Caco-2 (cell line): ENCODE measurements at regions of chr9 and their contacts with region 1.

Region 1: GRCh38 chr9:8361364-8361763 is 561.8 kb upstream of the DMAC1 start:
- DNase-seq: peak in 1 of 2 experiments; percentile 17
- H3K4me3 ChIP-seq: no peak overlapping the region
- H3K4me3 Mint-ChIP-seq: no peak overlapping the region
- H3K27ac Mint-ChIP-seq: peak overlapping the region; percentile 72
- H3K4me1 ChIP-seq: peaks cover 27% of the 10 kb centered on the region
- H3K4me1 Mint-ChIP-seq: peaks cover 5% of the 10 kb centered on the region
- H3K27me3 ChIP-seq: no peaks in the 10 kb centered on the region
- H3K27me3 Mint-ChIP-seq: no peaks in the 10 kb centered on the region
- CTCF ChIP-seq: no peak

Region 2: DNA sequence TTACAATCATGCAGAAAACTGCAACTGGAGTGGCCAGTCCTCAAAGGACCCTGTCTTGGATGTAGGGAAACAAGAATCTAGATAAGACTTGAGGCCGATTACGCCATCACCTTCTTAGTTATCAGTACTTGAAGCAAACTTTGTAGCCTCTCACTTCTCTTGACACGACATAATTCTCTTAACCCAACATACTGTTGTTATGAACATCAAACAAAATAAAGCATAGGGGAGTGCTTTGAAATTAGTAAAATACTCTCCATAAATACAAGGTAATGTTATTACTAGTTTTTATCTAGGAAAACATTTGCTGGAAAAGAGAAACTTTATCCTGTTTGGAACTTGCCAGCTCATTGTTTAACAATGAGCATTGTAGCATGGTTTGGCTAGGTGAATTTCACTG is 13.1 kb after region 1 on chr9:
- CTCF ChIA-PET with region 1: no interaction called
- POLR2A ChIA-PET with region 1: no interaction called
- intact Hi-C with region 1: loop called (anchors 1 kb)
- DNase-seq: peak; percentile 34 to 43
- H3K4me3 ChIP-seq: no peak overlapping the region
- H3K4me3 Mint-ChIP-seq: no peak overlapping the region
- H3K27ac Mint-ChIP-seq: no peak overlapping the region
- H3K4me1 ChIP-seq: peaks cover 78% of the 10 kb centered on the region
- H3K4me1 Mint-ChIP-seq: peaks cover 14% of the 10 kb centered on the region
- H3K27me3 ChIP-seq: no peaks in the 10 kb centered on the region
- H3K27me3 Mint-ChIP-seq: no peaks in the 10 kb centered on the region
- CTCF ChIP-seq: no peak